Heart right ventricle (tissue), 16 donors: ENCODE measurements at regions of chr11 and their contacts with region 1.

Region 1: DNA sequence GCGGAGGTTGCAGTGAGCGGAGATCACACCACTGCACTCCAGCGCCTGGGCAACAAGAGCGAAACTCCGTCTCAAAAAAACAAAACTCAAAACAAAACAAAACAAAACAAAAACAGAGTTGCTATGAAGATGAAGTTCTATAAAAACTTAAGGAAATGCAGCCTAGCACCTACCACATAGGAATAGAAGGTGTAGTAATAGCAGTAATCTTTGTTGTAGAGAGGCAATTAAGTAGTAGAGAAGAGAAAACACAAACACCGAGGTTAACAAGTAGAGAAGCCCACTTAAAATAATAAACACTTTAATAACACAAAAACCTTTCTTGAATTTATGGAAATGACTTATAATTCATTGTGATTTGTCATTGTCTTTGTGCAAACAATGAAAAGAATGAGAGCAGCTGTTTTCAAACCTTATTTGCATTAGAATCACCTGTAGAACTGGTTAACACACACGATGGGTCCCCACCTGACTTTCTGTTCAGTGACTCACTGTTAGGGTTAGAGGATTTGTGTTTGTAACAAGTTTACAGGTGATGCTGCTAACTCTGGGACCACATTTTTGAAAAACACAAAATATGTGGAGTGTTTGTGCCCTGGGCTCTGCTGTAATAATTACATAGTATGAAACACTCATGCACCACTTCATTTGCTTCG is 43.1 kb downstream of the TYR start:
- DNase-seq: no peak
- ATAC-seq: no peak
- H3K4me3 ChIP-seq: no peak overlapping the region
- H3K27ac ChIP-seq: no peak overlapping the region
- H3K4me1 ChIP-seq: no peaks in the 10 kb centered on the region
- H3K27me3 ChIP-seq: no peaks in the 10 kb centered on the region
- CTCF ChIP-seq: no peak

Region 2: DNA sequence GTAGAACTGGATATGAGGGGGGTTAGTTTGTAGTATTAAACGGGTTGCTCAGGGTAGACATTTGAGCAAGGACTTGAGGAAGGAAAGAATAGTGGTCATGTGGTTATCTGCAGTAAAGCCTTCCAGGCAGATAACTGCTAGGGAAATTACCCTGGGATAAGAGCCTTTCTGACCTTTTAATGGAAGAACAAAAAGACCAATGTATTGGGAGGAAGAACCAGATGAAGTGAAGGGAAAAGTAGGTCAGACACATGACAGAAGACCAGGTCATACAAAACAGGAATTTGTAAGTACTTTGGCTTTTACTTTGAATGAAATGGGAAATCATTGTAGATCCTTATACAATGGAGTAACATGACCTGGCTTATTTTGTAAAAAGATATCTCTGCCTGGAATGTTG is 641.3 kb before region 1 on chr11:
- intact Hi-C with region 1: no loop called
- DNase-seq: no peak
- ATAC-seq: no peak
- H3K4me3 ChIP-seq: no peak overlapping the region
- H3K27ac ChIP-seq: no peak overlapping the region
- H3K4me1 ChIP-seq: no peaks in the 10 kb centered on the region
- H3K27me3 ChIP-seq: peaks cover 0 to 5% (median 0%) of the 10 kb centered on the region in 7 donors
- CTCF ChIP-seq: no peak

Region 3: DNA sequence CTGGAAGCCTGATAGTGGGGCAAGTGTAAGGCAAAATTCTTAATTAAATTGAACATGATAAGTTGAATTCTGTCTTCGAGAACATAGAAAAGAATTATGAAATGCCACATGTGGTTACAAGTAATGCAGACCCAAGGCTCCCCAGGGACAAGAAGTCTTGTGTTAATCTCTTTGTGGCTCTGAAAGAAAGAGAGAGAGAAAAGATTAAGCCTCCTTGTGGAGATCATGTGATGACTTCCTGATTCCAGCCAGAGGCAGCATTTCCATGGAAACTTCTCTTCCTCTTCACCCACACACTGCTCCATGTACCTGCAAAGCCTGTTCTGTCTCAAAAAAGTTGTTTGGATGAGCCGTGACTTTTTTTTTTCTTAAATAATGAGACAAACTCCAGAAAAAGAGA is 45.0 kb before region 1 on chr11:
- intact Hi-C with region 1: loop called in 1 of 10 experiments (anchors 5 kb)
- DNase-seq: no peak
- ATAC-seq: no peak
- H3K4me3 ChIP-seq: no peak overlapping the region
- H3K27ac ChIP-seq: no peak overlapping the region
- H3K4me1 ChIP-seq: no peaks in the 10 kb centered on the region
- H3K27me3 ChIP-seq: no peaks in the 10 kb centered on the region
- CTCF ChIP-seq: no peak